Dendritic cell treated with granulocyte-macrophage colony-stimulating factor and Interleukin-4, amounts not matched to agents 40 ng/mL and 50 ng/mL, for 4 days (primary cell): ENCODE measurements at regions of chr2 and their contacts with region 1.

Region 1: GRCh38 chr2:216114714-216115557 is 5.8 kb downstream of the XRCC5 start:
- H3K4me3 Mint-ChIP-seq: peak overlapping the region; percentile 82
- H3K27ac Mint-ChIP-seq: peak overlapping the region; percentile 100
- H3K4me1 Mint-ChIP-seq: peaks cover 86% of the 10 kb centered on the region
- H3K27me3 Mint-ChIP-seq: no peaks in the 10 kb centered on the region

Region 2: DNA sequence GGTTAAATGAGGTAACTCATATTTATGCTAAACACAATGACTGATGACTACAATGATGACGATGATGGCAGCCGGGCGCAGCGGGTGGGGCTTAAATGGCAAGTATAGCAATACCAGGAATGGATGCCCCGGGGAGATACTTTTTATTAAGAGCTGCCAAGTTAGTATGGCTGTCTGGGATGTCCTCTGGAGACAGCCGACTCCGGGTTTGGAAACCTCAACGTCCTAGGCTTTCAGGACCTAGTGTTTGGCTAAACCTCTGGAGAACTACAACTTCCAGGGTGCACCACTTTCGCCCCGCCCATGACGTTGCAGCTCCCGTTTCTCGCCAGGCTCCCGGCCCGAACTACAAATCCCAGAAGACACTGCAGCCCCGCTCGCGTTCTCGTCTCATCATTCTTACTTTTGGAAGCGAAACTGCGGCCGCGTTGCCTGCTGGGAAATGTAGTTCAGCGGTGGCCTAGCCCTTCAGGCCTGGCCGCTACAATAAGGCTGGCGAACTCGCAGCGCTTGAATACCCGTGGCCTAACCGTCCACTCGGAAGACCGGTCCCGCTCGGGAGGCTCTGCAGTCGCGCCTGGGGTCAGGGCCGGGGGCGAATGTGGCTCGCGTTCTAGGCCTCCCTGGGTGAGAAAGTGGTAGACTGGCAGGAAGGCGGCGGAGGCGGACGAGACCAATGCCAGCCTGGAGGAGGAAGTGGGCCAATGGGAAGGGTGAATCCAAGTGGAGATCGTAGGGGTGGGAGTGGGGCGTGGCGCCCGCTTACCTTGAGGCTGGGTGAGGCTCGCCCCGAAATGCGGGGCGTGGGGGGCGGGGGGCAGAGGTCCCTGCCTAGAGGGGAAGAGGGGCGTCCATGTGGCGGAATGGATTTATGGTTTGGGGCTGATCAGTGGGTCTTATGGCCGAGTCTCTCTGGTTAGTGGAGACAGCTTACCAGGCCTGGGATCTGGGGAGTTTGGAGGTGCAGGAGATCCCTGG is 297.4 kb after region 1 on chr2 and contains the start of gene SMARCAL1:
- intact Hi-C with region 1: loop called (anchors 5 kb)
- H3K4me3 Mint-ChIP-seq: peak within 1 kb of the TSS; percentile 96
- H3K27ac Mint-ChIP-seq: peak within 1 kb of the TSS; percentile 93
- H3K4me1 Mint-ChIP-seq: peaks cover 10% of the 10 kb centered on the region
- H3K27me3 Mint-ChIP-seq: peaks cover 2% of the 10 kb centered on the region